K562 (cell line): ENCODE measurements at regions of chr12 and their contacts with region 1.

Region 1: DNA sequence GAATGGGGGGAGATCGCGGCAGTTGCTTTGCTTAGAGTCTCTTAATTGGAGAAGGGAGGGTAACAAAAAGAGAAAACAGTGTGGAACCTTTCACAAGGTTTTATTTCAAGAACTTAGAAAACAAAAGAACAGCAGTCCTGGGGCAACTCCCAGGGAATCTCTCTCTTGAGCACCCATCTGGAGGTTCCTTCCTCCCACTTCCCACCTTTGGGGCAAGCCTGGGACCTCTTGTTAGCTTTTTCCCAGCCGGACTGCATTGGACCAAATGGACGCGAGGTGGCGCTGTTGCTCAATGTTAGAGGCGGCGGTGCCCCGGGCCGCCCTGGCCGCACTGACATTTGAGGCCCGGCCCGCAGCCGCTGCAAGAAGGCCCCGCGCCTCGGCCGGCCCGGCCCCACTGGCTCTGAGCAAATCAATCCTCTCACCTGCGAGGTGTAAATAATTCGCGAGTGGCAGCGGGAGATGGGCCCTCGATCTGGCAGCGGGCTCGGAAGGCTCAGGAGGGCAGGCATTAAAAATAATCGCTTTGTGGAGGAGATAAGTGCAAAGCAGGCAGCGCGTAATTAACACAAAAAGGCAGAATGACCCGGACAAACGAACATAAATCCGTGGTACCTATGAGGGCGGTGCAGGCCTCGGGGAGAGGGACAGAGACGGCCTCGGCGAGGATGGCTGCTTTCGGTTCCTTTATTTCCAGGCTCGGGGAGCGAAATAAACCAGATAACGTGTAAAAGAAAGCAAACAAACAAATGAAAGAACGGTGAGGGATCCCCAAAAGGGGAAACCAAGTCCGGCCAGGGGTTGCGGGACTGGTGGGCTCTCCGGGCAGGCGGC is 2.7 kb upstream of the HOXC8 start:
- DNase-seq: peak; percentile 82 to 91 (median 86)
- ATAC-seq: peak; percentile 90
- H3K4me3 ChIP-seq: no peak overlapping the region
- H3K27ac ChIP-seq: no peak overlapping the region
- H3K4me1 ChIP-seq: peaks cover 24 to 41% of the 10 kb centered on the region in 2 experiments
- H3K27me3 ChIP-seq: no peaks in the 10 kb centered on the region
- CTCF ChIP-seq: peak; percentile 91 to 96 (median 92)
- EP300 ChIP-seq: no peak
- POLR2A ChIP-seq: no peak
- RAD21 ChIP-seq: peak; percentile 96 to 98

Region 2: GRCh38 chr12:53551889-53552291 is 454.2 kb before region 1 on chr12:
- CTCF ChIA-PET with region 1: no interaction called
- POLR2A ChIA-PET with region 1: no interaction called
- in situ Hi-C with region 1: no loop called
- intact Hi-C with region 1: no loop called
- DNase-seq: no peak
- ATAC-seq: no peak
- H3K4me3 ChIP-seq: no peak overlapping the region
- H3K27ac ChIP-seq: no peak overlapping the region
- H3K4me1 ChIP-seq: no peaks in the 10 kb centered on the region
- H3K27me3 ChIP-seq: no peaks in the 10 kb centered on the region
- CTCF ChIP-seq: no peak
- EP300 ChIP-seq: no peak
- POLR2A ChIP-seq: no peak
- RAD21 ChIP-seq: no peak

Region 3: GRCh38 chr12:53625946-53626701 is 379.9 kb before region 1 on chr12 and contains the start of gene ATF7:
- CTCF ChIA-PET with region 1: no interaction called
- POLR2A ChIA-PET with region 1: no interaction called
- in situ Hi-C with region 1: no loop called
- intact Hi-C with region 1: no loop called
- DNase-seq: peak; percentile 97 to 99 (median 98)
- ATAC-seq: peak; percentile 95
- H3K4me3 ChIP-seq: peak within 1 kb of the TSS; percentile 60
- H3K27ac ChIP-seq: peak within 1 kb of the TSS; percentile 98
- H3K4me1 ChIP-seq: peaks cover 8 to 10% of the 10 kb centered on the region in 2 experiments; a peak in 3 of 5 replicates
- H3K27me3 ChIP-seq: no peaks in the 10 kb centered on the region
- CTCF ChIP-seq: no peak
- EP300 ChIP-seq: no peak; the same call in 1 of the 2 replicates
- POLR2A ChIP-seq: peak; percentile 89
- RAD21 ChIP-seq: no peak
- polyA plus RNA-seq, gene ATF7: 28.9 to 30.4 TPM

Region 4: DNA sequence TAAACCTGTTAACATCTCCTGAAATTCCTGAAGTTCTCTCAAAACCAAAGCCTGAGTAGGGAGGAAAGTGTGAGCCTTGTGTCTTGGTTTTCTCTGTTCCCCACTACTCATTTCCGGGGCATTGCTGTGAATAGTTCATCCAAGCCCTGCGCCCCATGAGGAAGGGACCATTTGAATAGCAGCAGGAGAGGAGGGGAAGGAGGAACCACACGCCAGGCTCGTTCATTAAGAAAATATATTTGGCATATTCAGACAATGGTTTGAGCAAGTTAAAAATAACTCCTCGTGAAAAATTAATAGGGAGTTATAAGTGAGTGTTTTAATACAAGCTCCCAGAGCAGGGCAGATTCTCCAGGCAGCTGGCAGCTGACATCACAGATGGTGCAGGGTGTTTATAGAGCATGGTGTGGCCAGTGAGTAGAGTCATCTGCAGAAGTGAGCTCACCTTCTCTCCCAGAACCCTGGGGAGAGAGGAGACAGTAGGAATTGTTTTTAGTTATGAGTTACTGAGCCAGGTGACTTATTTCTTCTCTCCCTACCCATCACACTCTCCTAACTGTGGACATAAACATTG is 224.8 kb before region 1 on chr12:
- CTCF ChIA-PET with region 1: no interaction called
- POLR2A ChIA-PET with region 1: no interaction called
- in situ Hi-C with region 1: no loop called
- intact Hi-C with region 1: no loop called
- DNase-seq: no peak
- ATAC-seq: no peak
- H3K4me3 ChIP-seq: no peak overlapping the region
- H3K27ac ChIP-seq: no peak overlapping the region
- H3K4me1 ChIP-seq: no peaks in the 10 kb centered on the region
- H3K27me3 ChIP-seq: peaks cover 10 to 15% of the 10 kb centered on the region in 2 experiments; a peak in 2 of 5 replicates
- CTCF ChIP-seq: no peak
- EP300 ChIP-seq: no peak
- POLR2A ChIP-seq: no peak
- RAD21 ChIP-seq: no peak

Region 5: DNA sequence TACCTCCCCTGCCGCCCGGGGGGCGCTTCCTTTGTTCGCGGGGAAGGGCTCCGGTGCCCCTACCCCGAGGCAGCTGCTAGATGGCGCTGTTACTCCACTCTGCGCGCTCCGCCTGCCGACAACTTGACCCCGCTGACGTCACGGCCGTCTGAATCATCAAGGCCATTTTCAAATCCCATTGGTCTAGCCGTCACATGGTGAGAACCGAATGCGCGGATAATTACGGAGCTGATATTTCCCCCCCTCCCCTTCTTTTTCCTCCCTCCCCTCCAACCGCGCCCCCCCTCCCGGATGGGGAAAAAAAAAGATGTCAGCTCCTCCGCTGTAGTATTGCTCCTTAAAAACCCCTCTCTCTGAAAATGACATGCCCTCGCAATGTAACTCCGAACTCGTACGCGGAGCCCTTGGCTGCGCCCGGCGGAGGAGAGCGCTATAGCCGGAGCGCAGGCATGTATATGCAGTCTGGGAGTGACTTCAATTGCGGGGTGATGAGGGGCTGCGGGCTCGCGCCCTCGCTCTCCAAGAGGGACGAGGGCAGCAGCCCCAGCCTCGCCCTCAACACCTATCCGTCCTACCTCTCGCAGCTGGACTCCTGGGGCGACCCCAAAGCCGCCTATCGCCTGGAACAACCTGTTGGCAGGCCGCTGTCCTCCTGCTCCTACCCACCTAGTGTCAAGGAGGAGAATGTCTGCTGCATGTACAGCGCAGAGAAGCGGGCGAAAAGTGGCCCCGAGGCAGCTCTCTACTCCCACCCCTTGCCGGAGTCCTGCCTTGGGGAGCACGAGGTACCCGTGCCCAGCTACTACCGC is 21.0 kb before region 1 on chr12 and contains the start of gene HOXC10:
- CTCF ChIA-PET with region 1: interaction called, 26 read pairs
- POLR2A ChIA-PET with region 1: interaction called, 43 read pairs
- in situ Hi-C with region 1: no loop called
- intact Hi-C with region 1: loop called (anchors 2 kb)
- DNase-seq: peak; percentile 91 to 97 (median 92)
- ATAC-seq: peak; percentile 80
- H3K4me3 ChIP-seq: no peak within 1 kb of the TSS; the same call in 1 of the 2 replicates
- H3K27ac ChIP-seq: no peak within 1 kb of the TSS
- H3K4me1 ChIP-seq: peaks cover 29 to 43% of the 10 kb centered on the region in 2 experiments
- H3K27me3 ChIP-seq: peaks cover 18 to 21% of the 10 kb centered on the region in 2 experiments
- CTCF ChIP-seq: peak; percentile 82 to 95 (median 95)
- EP300 ChIP-seq: 0 out of 2 replicates have a peak, but pooled peaks have one; percentile 17
- POLR2A ChIP-seq: no peak
- RAD21 ChIP-seq: peak; percentile 88 to 91
- polyA plus RNA-seq, gene HOXC10: 0.25 to 0.42 TPM

Region 6: GRCh38 chr12:54032627-54033100 is 26.6 kb after region 1 on chr12 and contains the start of gene HOXC5:
- CTCF ChIA-PET with region 1: interaction called, 10 read pairs
- POLR2A ChIA-PET with region 1: no interaction called
- in situ Hi-C with region 1: no loop called
- intact Hi-C with region 1: loop called (anchors 2 kb)
- DNase-seq: peak; percentile 82 to 86 (median 84)
- ATAC-seq: peak; percentile 70
- H3K4me3 ChIP-seq: no peak within 1 kb of the TSS
- H3K27ac ChIP-seq: no peak within 1 kb of the TSS
- H3K4me1 ChIP-seq: peaks cover 0 to 28% of the 10 kb centered on the region in 2 experiments; a peak in 2 of 5 replicates
- H3K27me3 ChIP-seq: no peaks in the 10 kb centered on the region
- CTCF ChIP-seq: peak; percentile 95 to 96 (median 95)
- EP300 ChIP-seq: 0 out of 2 replicates have a peak, but pooled peaks have one; percentile 17
- POLR2A ChIP-seq: no peak
- RAD21 ChIP-seq: peak; percentile 80 to 89
- polyA plus RNA-seq, gene HOXC5: not detected

Region 7: GRCh38 chr12:54191550-54192022 is 185.5 kb after region 1 on chr12:
- CTCF ChIA-PET with region 1: interaction called, 17 read pairs
- POLR2A ChIA-PET with region 1: interaction called, 3 read pairs
- in situ Hi-C with region 1: no loop called
- intact Hi-C with region 1: loop called (anchors 1 kb)
- DNase-seq: peak; percentile 84 to 92 (median 88)
- ATAC-seq: peak; percentile 74
- H3K4me3 ChIP-seq: no peak overlapping the region
- H3K27ac ChIP-seq: no peak overlapping the region
- H3K4me1 ChIP-seq: peaks cover 26 to 29% of the 10 kb centered on the region in 2 experiments
- H3K27me3 ChIP-seq: no peaks in the 10 kb centered on the region
- CTCF ChIP-seq: peak; percentile 92 to 97 (median 93)
- EP300 ChIP-seq: peak; percentile 40; the same call in 1 of the 2 replicates
- POLR2A ChIP-seq: no peak
- RAD21 ChIP-seq: peak; percentile 71 to 79

Region 8: GRCh38 chr12:54207484-54208294 is 201.6 kb after region 1 on chr12:
- CTCF ChIA-PET with region 1: interaction called, 42 read pairs
- POLR2A ChIA-PET with region 1: interaction called, 3 read pairs
- in situ Hi-C with region 1: no loop called
- intact Hi-C with region 1: no loop called
- DNase-seq: peak; percentile 83 to 90 (median 88)
- ATAC-seq: peak; percentile 94
- H3K4me3 ChIP-seq: no peak overlapping the region
- H3K27ac ChIP-seq: no peak overlapping the region
- H3K4me1 ChIP-seq: peaks cover 6 to 13% of the 10 kb centered on the region in 2 experiments
- H3K27me3 ChIP-seq: peaks cover 2 to 14% of the 10 kb centered on the region in 2 experiments; a peak in 2 of 5 replicates
- CTCF ChIP-seq: peak; percentile 93 to 98 (median 94)
- EP300 ChIP-seq: no peak
- POLR2A ChIP-seq: no peak
- RAD21 ChIP-seq: peak; percentile 74 to 94

Region 9: DNA sequence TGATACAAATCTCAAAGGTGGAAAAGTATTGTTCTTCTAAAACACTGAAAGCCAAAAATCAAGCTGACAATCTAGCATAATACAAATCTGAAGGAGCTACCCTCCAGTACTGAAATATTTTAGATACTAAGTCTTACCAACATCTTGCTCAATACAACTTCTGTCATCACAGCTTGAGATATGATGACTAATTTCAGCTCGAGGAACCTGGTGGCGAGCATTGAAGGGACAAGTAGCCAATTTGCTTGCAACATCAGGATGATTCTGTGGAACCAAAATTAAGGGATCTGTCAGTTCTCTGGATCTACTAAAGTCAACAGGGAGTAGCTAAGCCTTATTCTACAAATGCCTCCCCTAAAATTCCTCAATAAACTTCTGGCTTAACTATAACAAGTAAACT is 457.0 kb after region 1 on chr12:
- CTCF ChIA-PET with region 1: no interaction called
- POLR2A ChIA-PET with region 1: no interaction called
- in situ Hi-C with region 1: no loop called
- intact Hi-C with region 1: no loop called
- DNase-seq: peak in 2 of 4 experiments; percentile 20 to 25
- ATAC-seq: no peak
- H3K4me3 ChIP-seq: no peak overlapping the region
- H3K27ac ChIP-seq: no peak overlapping the region
- H3K4me1 ChIP-seq: no peaks in the 10 kb centered on the region
- H3K27me3 ChIP-seq: no peaks in the 10 kb centered on the region
- CTCF ChIP-seq: no peak
- EP300 ChIP-seq: no peak
- POLR2A ChIP-seq: no peak
- RAD21 ChIP-seq: no peak